ENCODE measurements at regions of chr11 and their contacts with region 1.

Region 1: GRCh38 chr11:57493507-57494503 is 21.7 kb downstream of the SLC43A1 start:
- DNase-seq: no peak
- H3K4me3 ChIP-seq: no peak overlapping the region
- H3K27me3 ChIP-seq: no peaks in the 10 kb centered on the region
- CTCF ChIP-seq: peak; percentile 89

Region 2: DNA sequence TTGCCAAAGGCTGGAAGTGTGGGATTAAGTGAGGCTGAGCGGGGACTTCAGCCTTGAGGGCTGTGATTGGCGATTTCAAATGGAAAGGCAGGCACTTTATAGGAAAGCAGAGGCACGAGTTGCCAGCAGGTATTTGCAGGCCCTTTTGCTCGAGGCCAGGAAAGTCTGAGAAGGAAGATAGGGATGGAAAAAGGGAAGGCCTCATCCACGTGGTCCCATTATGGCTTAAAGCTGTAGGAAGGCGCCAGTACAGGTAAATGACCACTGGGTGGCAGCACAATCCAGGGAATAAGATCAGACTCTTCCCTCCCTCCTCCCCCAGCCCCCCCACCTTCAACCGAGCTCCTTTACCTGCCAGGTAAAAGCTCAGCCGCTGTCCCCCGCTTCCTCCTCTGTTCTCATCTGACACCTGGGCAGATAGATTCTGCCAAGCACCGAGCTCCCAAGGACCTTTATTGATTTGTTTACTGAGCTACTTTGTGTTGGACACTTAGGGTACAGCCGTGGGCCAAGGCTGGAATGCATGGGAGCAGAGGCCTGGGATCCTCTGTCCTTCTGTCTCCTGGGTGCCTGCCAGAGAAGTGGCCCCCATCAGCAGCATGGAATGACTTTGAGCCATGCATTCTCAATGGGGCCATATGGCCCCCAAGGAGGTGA is 148.1 kb before region 1 on chr11:
- CTCF ChIA-PET with region 1: interaction called, 12 read pairs
- POLR2A ChIA-PET with region 1: no interaction called
- DNase-seq: no peak
- H3K4me3 ChIP-seq: no peak overlapping the region
- H3K27me3 ChIP-seq: no peaks in the 10 kb centered on the region; the same call in 1 of the 2 replicates
- CTCF ChIP-seq: peak; percentile 72

Region 3: DNA sequence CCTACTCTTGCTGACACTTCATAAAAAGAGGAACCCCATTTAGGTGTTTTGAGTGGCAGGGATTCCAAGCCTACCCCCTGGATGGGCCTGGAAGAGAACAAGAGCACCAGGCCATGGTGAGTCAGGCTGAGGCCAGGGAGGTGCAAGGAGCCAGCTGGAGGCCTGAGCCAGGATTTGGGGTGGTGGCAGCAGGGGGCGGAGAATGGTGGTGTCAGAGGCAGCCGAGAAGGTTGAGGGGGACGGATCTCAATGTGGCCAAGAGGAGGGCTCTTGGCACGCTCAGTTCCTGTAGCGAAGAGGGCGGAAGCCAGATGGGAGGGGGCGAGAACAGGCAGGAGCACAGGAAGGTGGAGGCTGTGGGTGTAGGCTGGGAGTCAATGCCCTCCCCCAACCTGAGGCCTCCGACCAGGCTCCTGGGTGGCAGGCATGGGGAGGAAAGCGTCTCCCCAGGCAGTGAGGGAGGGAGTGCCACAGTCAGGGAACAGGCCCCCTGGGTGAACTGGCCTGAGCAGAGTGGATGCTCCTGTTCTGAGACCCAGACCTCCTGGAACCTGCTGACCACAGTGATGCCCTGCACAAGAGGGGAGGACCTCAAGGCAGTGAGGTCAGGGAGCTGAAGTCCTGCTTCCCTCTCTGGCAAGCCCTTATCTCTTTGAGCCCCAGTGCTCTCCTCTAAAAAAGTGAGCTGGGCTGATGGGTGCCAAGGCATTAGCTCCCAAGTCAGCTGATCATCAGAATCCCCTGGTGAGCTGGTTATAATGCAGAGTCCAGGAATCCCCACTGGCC is 19.6 kb before region 1 on chr11:
- CTCF ChIA-PET with region 1: interaction called, 169 read pairs
- POLR2A ChIA-PET with region 1: no interaction called
- DNase-seq: no peak
- H3K4me3 ChIP-seq: no peak overlapping the region
- H3K27me3 ChIP-seq: peaks cover 10% of the 10 kb centered on the region
- CTCF ChIP-seq: no peak

Region 4: GRCh38 chr11:57508341-57509170 is 14.8 kb after region 1 on chr11:
- CTCF ChIA-PET with region 1: interaction called, 136 read pairs
- POLR2A ChIA-PET with region 1: no interaction called
- DNase-seq: no peak
- H3K4me3 ChIP-seq: no peak overlapping the region
- H3K27me3 ChIP-seq: no peaks in the 10 kb centered on the region
- CTCF ChIP-seq: no peak

Region 5: DNA sequence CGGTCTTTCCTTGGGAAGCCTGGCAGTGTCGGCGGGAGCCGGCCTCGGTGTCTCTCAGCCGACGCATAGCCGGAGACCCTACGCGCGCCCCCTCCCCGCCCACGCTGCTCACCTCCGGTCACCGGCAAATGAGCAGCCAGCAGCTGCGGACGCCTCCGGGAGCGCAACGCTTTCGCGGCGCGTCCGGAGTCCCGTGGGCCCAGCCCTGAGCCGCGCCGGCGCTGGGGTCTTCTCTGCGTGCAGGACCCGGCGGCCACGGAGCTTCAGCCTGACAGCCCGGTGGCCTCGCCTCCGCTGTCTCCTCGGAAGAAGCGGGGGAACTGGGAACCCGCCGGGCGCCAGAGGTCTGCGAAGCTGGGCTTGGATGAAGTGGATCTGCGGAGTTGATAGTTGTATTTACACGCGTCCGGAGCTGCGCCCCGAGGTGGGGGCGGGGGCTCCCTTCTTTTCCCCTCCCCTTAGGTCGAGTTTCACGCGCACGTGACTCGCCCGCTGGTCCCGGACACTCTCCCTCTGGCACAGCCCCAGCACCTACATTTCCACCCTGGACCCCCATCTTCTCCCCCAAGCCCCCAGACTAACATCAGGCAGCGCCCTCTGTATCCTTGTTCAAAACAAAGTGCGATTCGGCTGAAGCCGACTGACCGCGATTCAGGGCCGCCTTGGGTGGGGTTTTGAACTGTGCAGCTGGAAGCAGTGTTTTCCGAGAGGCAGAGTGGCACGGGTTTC is 21.7 kb after region 1 on chr11 and contains the start of gene SLC43A1:
- CTCF ChIA-PET with region 1: interaction called, 136 read pairs
- POLR2A ChIA-PET with region 1: no interaction called
- DNase-seq: no peak
- H3K4me3 ChIP-seq: peak within 1 kb of the TSS; percentile 79
- H3K27me3 ChIP-seq: no peaks in the 10 kb centered on the region
- CTCF ChIP-seq: no peak; the same call in 1 of the 2 replicates
- polyA plus RNA-seq, gene SLC43A1: 11.8 and 23.4 TPM in 2 replicates

Measured in BJ (cell line).